K562 (cell line): ENCODE measurements at regions of chr12 and their contacts with region 1.

Region 1: DNA sequence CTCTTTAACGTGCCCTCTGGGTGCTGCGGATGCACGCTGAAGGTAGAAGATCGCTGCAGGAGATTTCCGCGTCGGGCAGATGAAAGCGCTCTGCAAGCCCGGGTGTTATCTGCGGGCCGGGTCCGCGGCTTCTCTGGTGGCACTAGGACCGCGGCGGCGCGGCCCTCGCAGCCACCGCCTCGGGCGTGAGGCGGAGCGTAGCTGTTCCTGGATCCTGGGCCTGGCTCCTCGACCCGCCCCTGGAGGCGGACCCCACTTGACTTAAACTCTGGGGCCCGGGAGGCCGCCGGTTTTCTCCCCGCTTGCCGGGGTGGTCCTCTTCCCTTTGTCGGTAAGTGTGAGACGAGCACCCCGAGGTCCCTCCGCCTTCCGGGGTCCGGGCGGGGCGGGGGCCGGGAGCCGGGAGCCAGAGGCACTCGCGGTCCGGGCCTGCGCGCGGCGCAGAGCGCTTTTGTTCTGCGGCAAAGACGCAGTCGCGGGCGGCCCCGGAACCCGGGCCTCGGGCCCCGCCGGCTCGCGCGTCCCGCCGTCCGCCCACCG is at the start of gene RESF1:
- DNase-seq: peak; percentile 85 to 94 (median 88)
- ATAC-seq: peak; percentile 95
- H3K4me3 ChIP-seq: peak within 1 kb of the TSS; percentile 62
- H3K27ac ChIP-seq: peak within 1 kb of the TSS; percentile 90
- H3K4me1 ChIP-seq: peaks cover 17 to 21% of the 10 kb centered on the region in 2 experiments; a peak in 4 of 5 replicates
- H3K27me3 ChIP-seq: no peaks in the 10 kb centered on the region
- CTCF ChIP-seq: no peak; a peak in 1 of 6 replicates
- EP300 ChIP-seq: peak; percentile 35; the same call in 1 of the 2 replicates
- POLR2A ChIP-seq: peak; percentile 74
- RAD21 ChIP-seq: peak; percentile 39 to 51
- polyA plus RNA-seq, gene RESF1: 21.5 to 30.1 TPM

Region 2: GRCh38 chr12:31999692-32000091 is 40.5 kb after region 1 on chr12:
- CTCF ChIA-PET with region 1: no interaction called
- POLR2A ChIA-PET with region 1: interaction called, 4 read pairs
- in situ Hi-C with region 1: no loop called
- intact Hi-C with region 1: loop called (anchors 1 kb)
- DNase-seq: no peak
- ATAC-seq: no peak
- H3K4me3 ChIP-seq: no peak overlapping the region
- H3K27ac ChIP-seq: peak overlapping the region; percentile 52; the same call in 2 of the 3 replicates
- H3K4me1 ChIP-seq: peaks cover 20 to 23% of the 10 kb centered on the region in 2 experiments
- H3K27me3 ChIP-seq: no peaks in the 10 kb centered on the region
- CTCF ChIP-seq: no peak
- EP300 ChIP-seq: no peak
- POLR2A ChIP-seq: no peak
- RAD21 ChIP-seq: no peak